B cell (primary cell): ENCODE measurements at regions of chr5 and their contacts with region 1.

Region 1: DNA sequence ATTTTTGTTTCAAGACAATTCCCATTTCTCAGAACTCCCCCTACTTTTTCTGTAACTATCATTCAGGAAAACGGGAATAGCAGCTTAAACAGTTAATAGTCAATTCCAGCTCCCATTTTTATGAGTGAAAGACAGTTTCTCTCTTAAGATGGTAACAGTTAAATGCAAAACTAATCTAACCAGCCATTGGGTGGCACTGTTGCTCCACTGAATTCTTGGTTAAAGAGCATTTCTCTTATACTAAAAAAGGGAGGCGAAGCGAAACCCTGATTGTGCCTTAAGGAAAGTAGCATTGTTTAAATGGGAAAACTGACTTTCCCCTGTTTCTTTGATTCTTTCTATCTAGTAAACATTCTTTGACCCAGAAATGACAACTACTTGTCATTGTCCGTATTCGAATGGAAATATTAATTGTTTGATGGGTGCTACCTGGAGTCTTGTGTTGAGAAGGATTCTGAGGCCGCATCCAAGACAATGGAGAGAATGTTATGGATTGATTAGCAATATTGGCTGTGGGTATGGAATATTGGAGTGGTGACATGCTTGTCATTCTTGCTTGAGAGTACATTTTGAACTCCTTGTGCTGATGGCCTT is 507.8 kb downstream of the MAT2B start:
- DNase-seq: peak; percentile 79
- ATAC-seq: peak; percentile 65
- H3K4me3 ChIP-seq: no peak overlapping the region
- H3K4me3 Mint-ChIP-seq: peak overlapping the region; percentile 48
- H3K27ac ChIP-seq: no peak overlapping the region
- H3K27ac Mint-ChIP-seq: peak overlapping the region; percentile 43
- H3K4me1 ChIP-seq: peaks cover 4 to 8% of the 10 kb centered on the region in 2 donors
- H3K4me1 Mint-ChIP-seq: peaks cover 11% of the 10 kb centered on the region
- H3K27me3 ChIP-seq: no peaks in the 10 kb centered on the region
- H3K27me3 Mint-ChIP-seq: no peaks in the 10 kb centered on the region
- CTCF ChIP-seq: peak; percentile 88

Region 2: DNA sequence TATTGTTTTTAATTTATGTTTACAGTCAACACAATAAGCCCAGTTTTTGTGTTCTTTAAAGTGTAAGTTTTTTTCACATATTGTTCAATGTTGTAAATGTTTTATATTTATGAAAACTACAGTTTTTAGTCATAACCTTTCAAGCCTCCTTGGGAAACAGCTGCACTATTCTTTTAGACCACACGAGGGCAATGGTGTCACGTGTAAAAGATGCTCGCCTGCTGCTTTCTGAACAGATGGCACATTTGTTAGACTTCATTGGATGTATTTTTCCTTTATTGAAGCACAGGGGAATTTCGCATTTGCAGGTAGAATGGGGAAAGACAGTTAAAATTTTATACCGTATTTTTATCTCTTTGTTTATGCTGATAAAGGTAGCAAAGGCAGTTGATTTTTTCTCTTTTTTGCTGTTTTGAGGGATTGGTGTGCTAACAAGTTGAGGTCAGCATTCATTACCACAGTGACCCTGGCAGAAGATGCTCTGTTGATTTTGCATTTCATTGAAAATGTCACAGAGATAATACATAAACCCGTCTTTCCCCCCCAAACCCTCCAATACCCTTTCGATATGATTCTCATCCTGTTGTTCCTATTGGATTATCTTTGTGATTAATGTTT is 448.7 kb before region 1 on chr5:
- CTCF ChIA-PET with region 1: interaction called, 3 read pairs
- POLR2A ChIA-PET with region 1: no interaction called
- intact Hi-C with region 1: loop called (anchors 2 kb)
- DNase-seq: peak; percentile 72
- ATAC-seq: peak; percentile 71
- H3K4me3 ChIP-seq: no peak overlapping the region
- H3K4me3 Mint-ChIP-seq: no peak overlapping the region
- H3K27ac ChIP-seq: no peak overlapping the region
- H3K27ac Mint-ChIP-seq: no peak overlapping the region
- H3K4me1 ChIP-seq: peaks cover 17 to 21% of the 10 kb centered on the region in 2 donors
- H3K4me1 Mint-ChIP-seq: peaks cover 21% of the 10 kb centered on the region
- H3K27me3 ChIP-seq: peaks cover 0 to 33% (median 26%) of the 10 kb centered on the region in 4 experiments
- H3K27me3 Mint-ChIP-seq: peaks cover 61% of the 10 kb centered on the region
- CTCF ChIP-seq: peak; percentile 97

Region 3: GRCh38 chr5:163809473-163809872 is 203.7 kb before region 1 on chr5:
- CTCF ChIA-PET with region 1: interaction called, 7 read pairs
- POLR2A ChIA-PET with region 1: no interaction called
- intact Hi-C with region 1: loop called (anchors 1 kb)
- DNase-seq: peak; percentile 27
- ATAC-seq: peak; percentile 33
- H3K4me3 ChIP-seq: no peak overlapping the region
- H3K4me3 Mint-ChIP-seq: no peak overlapping the region
- H3K27ac ChIP-seq: no peak overlapping the region
- H3K27ac Mint-ChIP-seq: no peak overlapping the region
- H3K4me1 ChIP-seq: peaks cover 0 to 5% of the 10 kb centered on the region in 2 donors
- H3K4me1 Mint-ChIP-seq: peaks cover 21% of the 10 kb centered on the region
- H3K27me3 ChIP-seq: no peaks in the 10 kb centered on the region
- H3K27me3 Mint-ChIP-seq: peaks cover 5% of the 10 kb centered on the region
- CTCF ChIP-seq: no peak

Region 4: GRCh38 chr5:164002628-164003027 is 10.5 kb before region 1 on chr5:
- CTCF ChIA-PET with region 1: interaction called, 12 read pairs
- POLR2A ChIA-PET with region 1: no interaction called
- intact Hi-C with region 1: no loop called
- DNase-seq: no peak
- ATAC-seq: no peak
- H3K4me3 ChIP-seq: no peak overlapping the region
- H3K4me3 Mint-ChIP-seq: no peak overlapping the region
- H3K27ac ChIP-seq: no peak overlapping the region
- H3K27ac Mint-ChIP-seq: no peak overlapping the region
- H3K4me1 ChIP-seq: no peaks in the 10 kb centered on the region
- H3K4me1 Mint-ChIP-seq: peaks cover 4% of the 10 kb centered on the region
- H3K27me3 ChIP-seq: no peaks in the 10 kb centered on the region
- H3K27me3 Mint-ChIP-seq: no peaks in the 10 kb centered on the region
- CTCF ChIP-seq: no peak